MCF 10A (cell line): ENCODE measurements at regions of chr2 and their contacts with region 1.

Region 1: DNA sequence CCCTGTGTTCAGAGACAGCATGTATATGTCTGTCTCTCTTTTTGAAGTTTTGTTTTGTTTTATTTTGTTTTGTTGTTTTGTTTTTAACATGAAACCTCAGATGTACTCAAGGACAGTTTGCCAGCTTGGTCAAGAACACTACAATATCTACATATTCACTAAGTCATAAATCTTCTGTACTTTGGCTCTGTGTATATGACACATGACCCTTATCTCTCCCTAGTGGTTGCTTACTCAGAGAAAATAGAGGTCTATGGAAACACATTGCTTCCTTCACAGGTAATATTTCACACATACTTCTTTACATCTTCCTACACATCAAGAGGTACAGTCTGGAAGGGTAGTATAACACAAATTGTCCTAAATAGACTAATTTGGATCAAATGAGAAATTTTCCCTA is 312.6 kb upstream of the VRK2 start:
- DNase-seq: no peak
- H3K4me3 Mint-ChIP-seq: no peak overlapping the region
- H3K27ac Mint-ChIP-seq: no peak overlapping the region
- H3K4me1 Mint-ChIP-seq: no peaks in the 10 kb centered on the region
- H3K27me3 Mint-ChIP-seq: no peaks in the 10 kb centered on the region
- CTCF ChIP-seq: no peak

Region 2: DNA sequence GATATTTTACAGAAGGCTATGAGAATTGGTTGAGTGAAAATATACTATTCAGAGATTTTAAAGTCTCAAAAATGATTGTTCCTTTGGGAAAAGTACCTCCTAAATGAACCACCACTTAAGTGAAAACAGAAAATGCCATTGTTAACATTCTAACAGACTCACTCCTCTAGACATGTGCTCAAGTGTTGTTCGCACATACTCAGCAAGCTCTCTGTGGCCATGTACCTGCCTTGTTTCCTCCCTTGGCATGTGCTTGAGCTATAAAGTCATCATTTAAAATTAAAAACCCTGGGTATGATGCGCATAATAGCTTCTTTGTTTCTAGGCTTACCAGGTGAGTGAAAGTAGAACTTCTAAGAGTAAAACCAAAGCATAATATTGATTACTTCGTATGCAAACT is 30.5 kb before region 1 on chr2:
- CTCF ChIA-PET with region 1: no interaction called
- POLR2A ChIA-PET with region 1: no interaction called
- intact Hi-C with region 1: no loop called
- DNase-seq: no peak
- H3K4me3 Mint-ChIP-seq: no peak overlapping the region
- H3K27ac Mint-ChIP-seq: no peak overlapping the region
- H3K4me1 Mint-ChIP-seq: no peaks in the 10 kb centered on the region
- H3K27me3 Mint-ChIP-seq: no peaks in the 10 kb centered on the region
- CTCF ChIP-seq: no peak

Region 3: GRCh38 chr2:57720728-57721627 is 13.0 kb before region 1 on chr2:
- CTCF ChIA-PET with region 1: interaction called, 10 read pairs
- POLR2A ChIA-PET with region 1: no interaction called
- intact Hi-C with region 1: no loop called
- DNase-seq: peak; percentile 69
- H3K4me3 Mint-ChIP-seq: peak overlapping the region; percentile 64
- H3K27ac Mint-ChIP-seq: no peak overlapping the region
- H3K4me1 Mint-ChIP-seq: peaks cover 11% of the 10 kb centered on the region
- H3K27me3 Mint-ChIP-seq: no peaks in the 10 kb centered on the region
- CTCF ChIP-seq: peak; percentile 66

Region 4: DNA sequence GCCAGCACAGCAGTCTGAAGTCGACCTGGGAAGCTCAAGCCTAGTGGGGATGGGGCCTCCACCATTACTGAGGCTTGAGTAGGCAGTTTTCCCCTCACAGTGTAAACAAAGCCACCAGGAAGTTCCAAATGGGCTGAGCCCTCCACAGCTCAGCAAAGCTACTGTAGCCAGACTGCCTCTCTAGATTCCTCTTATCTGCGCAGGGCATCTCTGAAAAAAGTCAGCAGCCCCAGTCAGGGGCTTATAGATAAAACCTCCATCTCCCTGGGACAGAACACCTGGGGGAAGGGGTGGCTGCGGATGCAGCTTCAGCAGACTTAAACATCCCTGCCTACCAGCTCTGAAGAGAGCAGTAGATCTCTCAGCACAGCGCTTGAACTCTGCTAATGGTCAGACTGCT is 94.3 kb after region 1 on chr2:
- CTCF ChIA-PET with region 1: no interaction called
- POLR2A ChIA-PET with region 1: no interaction called
- intact Hi-C with region 1: no loop called
- DNase-seq: no peak
- H3K4me3 Mint-ChIP-seq: no peak overlapping the region
- H3K27ac Mint-ChIP-seq: no peak overlapping the region
- H3K4me1 Mint-ChIP-seq: no peaks in the 10 kb centered on the region
- H3K27me3 Mint-ChIP-seq: no peaks in the 10 kb centered on the region
- CTCF ChIP-seq: no peak